ENCODE measurements at regions of chr2 and their contacts with region 1.

Region 1: GRCh38 chr2:69829256-69830046 is at the start of gene GMCL1:
- DNase-seq: peak; percentile 93 to 97 (median 96)
- H3K4me3 ChIP-seq: peak within 1 kb of the TSS; percentile 78 to 100 (median 98)
- H3K27ac ChIP-seq: peak within 1 kb of the TSS; percentile 36 to 98 (median 93)
- H3K27me3 ChIP-seq: no peaks in the 10 kb centered on the region
- CTCF ChIP-seq: peak in 43 of 56 donors; percentile 3 to 70 (median 45)
- total RNA-seq, gene GMCL1: 11.5 to 39.4 (median 22.1) TPM

Region 2: GRCh38 chr2:69565431-69565839 is 264.0 kb before region 1 on chr2:
- intact Hi-C with region 1: loop called in 1 of 2 experiments (anchors 10 kb)
- DNase-seq: peak in 9 of 10 donors; percentile 31 to 72 (median 57)
- H3K4me3 ChIP-seq: no peak overlapping the region
- H3K27ac ChIP-seq: peak overlapping the region in 1 of 59 donors; percentile 10
- H3K27me3 ChIP-seq: no peaks in the 10 kb centered on the region
- CTCF ChIP-seq: peak; percentile 49 to 87 (median 76)

Region 3: DNA sequence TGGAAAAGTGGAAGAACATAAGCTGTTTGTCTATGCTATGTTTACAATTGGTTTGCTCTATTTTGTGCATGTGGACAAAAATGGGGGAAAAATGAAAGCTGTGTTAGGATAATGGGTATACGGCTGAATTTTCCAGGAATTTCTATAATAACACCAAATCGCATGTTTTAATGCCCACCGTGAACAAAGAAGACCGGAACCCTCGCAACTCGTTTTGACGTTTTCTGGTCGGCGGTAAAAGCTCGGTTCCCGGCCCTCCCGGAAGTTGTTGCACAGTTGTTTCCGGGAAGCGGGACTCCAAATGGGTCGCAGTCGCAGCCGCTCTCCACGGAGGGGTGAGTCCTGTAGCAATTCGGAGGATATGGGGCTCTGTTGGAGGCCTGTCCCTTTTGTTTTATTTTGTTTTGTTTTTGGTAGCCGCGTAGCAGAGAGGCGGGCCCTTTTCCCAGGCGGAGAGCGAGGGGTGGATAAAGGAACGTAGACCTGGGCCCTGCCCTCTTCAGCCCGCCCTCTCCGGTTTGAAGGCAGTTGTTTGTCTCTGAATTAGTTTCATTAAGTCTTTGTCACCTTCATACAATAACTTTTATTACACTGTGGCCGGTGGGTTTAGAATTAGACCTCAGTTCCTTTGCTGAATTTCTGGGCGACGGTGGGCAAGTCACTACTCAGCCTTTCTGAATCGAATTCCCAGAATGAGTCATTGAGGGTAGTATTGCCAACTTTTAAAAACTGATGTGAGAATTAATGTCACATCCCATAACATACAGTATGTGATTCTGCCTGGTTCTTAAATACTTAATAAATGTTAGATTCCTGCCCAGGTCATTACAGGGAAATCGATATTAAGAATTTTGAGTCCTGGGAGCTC is 64.5 kb after region 1 on chr2 and contains the start of gene SNRNP27:
- intact Hi-C with region 1: loop called (anchors 5 to 10 kb)
- DNase-seq: peak; percentile 65 to 89 (median 82)
- H3K4me3 ChIP-seq: peak within 1 kb of the TSS; percentile 58 to 99 (median 85)
- H3K27ac ChIP-seq: peak within 1 kb of the TSS in 56 of 59 donors; percentile 1 to 92 (median 80)
- H3K27me3 ChIP-seq: no peaks in the 10 kb centered on the region
- CTCF ChIP-seq: peak in 13 of 56 donors; percentile 9 to 39 (median 23)
- total RNA-seq, gene SNRNP27: 37.8 to 95.6 (median 69.7) TPM